ENCODE measurements at regions of chr12 and their contacts with region 1.

Region 1: DNA sequence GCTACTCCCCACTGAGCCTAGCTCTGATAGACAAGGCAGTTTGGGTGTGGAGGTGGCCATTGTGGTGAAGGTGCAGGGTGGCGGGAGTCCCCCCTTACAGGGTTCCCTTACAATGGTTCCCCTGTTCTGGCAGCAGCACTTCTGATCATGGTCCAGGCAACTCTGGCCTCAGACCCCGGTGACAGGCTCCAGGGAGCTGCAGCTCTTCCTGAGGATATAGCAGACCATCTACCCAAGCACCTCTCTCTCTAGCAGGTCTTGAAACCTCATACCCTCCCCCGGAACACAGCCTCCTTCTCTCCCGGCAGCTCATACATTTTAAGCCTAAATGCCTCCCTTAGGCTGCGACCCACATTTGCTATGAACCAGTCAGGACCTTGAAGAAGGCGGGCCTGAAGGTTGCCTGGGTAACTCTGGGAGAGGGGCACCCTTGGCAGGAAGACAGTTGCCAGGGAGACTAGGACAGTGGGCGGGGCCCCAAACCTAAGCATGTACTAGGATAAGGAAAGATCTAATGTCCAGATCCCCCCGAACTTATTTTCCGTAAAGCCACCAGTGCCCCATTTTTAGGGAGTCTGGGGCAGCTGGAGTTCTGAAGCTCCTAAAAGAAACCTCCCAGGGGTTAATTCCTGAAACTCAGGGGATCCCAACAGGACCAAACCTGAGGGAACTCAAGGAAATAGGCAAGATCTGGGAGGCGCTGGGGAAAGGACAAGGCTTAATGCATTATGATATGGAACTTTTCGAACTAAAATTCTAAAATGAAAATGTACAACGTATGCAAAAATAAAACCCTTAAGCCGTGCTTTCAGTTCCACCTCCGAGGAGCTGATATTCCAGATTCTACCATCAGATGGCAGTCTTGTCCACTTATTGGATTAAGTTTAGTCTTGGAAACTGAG is 4.5 kb upstream of the GDF11 start:
- DNase-seq: peak; percentile 57 to 85 (median 58)
- ATAC-seq: peak; percentile 74
- H3K4me3 ChIP-seq: peak overlapping the region; percentile 35
- H3K27ac ChIP-seq: peak overlapping the region; percentile 27
- H3K4me1 ChIP-seq: peaks cover 21 to 24% of the 10 kb centered on the region in 2 experiments
- H3K27me3 ChIP-seq: no peaks in the 10 kb centered on the region
- CTCF ChIP-seq: peak; percentile 66 to 91 (median 85)
- EP300 ChIP-seq: no peak
- POLR2A ChIP-seq: no peak
- RAD21 ChIP-seq: peak; percentile 94

Region 2: DNA sequence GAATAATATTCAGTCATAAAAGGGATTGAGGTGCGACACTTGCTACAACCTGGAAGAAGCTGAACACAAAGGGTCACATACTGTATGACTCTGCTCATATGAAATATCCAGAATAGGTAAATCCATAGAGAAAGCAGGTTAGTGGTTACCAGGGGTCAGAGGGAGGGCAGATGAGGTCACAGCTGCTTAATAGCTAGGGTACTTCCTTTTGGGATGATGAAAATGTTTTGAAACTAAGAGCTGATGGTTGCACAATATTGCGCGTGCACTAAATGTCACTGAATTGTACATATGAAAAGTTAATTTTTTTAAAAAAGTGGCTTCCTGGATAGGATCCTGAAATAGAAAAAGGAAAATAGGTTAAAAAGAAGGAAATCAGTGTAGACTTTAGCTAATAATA is 694.8 kb before region 1 on chr12:
- CTCF ChIA-PET with region 1: no interaction called
- POLR2A ChIA-PET with region 1: no interaction called
- in situ Hi-C with region 1: no loop called
- intact Hi-C with region 1: no loop called
- DNase-seq: no peak
- ATAC-seq: no peak
- H3K4me3 ChIP-seq: no peak overlapping the region
- H3K27ac ChIP-seq: no peak overlapping the region
- H3K4me1 ChIP-seq: no peaks in the 10 kb centered on the region
- H3K27me3 ChIP-seq: peaks cover 6 to 13% of the 10 kb centered on the region in 2 experiments; a peak in 4 of 5 replicates
- CTCF ChIP-seq: no peak
- EP300 ChIP-seq: no peak; the same call in 1 of the 2 replicates
- POLR2A ChIP-seq: no peak
- RAD21 ChIP-seq: no peak

Region 3: DNA sequence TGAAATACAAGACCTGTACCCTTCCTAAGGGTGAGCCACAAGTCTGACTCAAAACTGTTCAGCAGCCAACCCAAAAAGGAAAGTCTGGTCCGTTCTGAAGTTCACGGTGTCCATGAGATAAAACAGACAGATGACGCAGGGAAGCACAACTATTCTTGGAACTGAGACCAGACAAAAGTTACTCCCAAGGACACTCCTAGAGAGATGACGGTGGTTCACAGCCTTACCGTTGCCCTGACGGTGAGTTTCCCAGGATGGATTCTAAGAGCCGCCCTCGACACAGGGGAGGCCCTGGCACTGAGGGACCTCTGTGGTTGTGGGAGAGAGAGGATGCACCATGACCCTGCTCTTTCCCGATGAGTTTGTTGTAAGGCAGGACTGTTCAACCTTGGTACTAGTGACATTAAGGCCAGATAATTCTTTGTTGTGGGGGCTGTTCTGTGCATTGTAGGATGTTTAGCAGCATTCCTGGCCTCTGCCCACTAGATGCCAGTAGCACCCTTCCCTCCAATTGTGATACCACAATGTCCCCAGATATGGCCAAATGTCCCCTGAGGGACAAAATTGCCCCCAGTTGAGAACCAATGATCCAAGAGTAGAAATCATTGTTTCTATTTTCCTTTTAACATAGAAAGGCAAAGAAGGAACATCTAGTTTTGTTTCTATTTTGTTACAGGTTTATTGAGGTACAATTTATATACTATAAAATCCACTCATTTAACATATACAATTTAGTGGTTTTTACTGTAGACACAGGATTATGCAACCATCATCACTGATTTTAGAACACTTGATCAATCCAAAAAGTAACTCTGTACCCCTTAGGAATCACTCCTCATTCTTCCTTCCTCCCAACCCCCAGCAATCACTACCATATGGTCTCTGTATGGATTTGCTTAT is 78.6 kb before region 1 on chr12:
- CTCF ChIA-PET with region 1: interaction called, 3 read pairs
- POLR2A ChIA-PET with region 1: interaction called, 3 read pairs
- in situ Hi-C with region 1: no loop called
- intact Hi-C with region 1: loop called (anchors 1 kb)
- DNase-seq: peak in 2 of 4 experiments; percentile 39 to 67
- ATAC-seq: peak; percentile 51
- H3K4me3 ChIP-seq: no peak overlapping the region
- H3K27ac ChIP-seq: no peak overlapping the region
- H3K4me1 ChIP-seq: peaks cover 0 to 11% of the 10 kb centered on the region in 2 experiments; a peak in 3 of 5 replicates
- H3K27me3 ChIP-seq: peaks cover 2 to 3% of the 10 kb centered on the region in 2 experiments; a peak in 1 of 5 replicates
- CTCF ChIP-seq: peak; percentile 43 to 45 (median 45); a peak in 5 of 6 replicates
- EP300 ChIP-seq: no peak
- POLR2A ChIP-seq: no peak
- RAD21 ChIP-seq: peak; percentile 42 to 61

Region 4: DNA sequence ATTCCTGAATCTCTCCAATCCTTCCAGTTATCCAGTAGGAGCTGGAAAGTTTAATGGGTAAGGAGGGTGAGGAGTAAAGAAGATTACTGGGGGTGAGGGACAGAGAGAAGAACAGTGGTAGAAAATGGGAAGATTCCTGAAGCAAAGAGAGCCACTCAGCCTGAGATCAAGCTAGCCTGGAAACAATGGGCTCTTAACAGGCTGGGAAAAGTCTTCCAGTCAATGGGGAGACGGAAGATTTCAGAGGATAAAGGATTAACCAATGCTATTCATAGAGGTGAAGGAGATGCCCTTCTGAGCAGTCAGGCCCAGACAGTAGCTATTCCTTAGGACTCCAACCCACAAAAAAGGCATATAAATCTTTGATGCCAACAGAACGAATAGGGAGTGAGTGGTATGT is 19.3 kb after region 1 on chr12:
- CTCF ChIA-PET with region 1: no interaction called
- POLR2A ChIA-PET with region 1: interaction called, 44 read pairs
- in situ Hi-C with region 1: no loop called
- intact Hi-C with region 1: no loop called
- DNase-seq: no peak
- ATAC-seq: no peak; the same call in 2 of the 3 replicates
- H3K4me3 ChIP-seq: no peak overlapping the region
- H3K27ac ChIP-seq: no peak overlapping the region
- H3K4me1 ChIP-seq: no peaks in the 10 kb centered on the region; a peak in 1 of 5 replicates
- H3K27me3 ChIP-seq: no peaks in the 10 kb centered on the region
- CTCF ChIP-seq: no peak
- EP300 ChIP-seq: no peak
- POLR2A ChIP-seq: no peak
- RAD21 ChIP-seq: no peak

Region 5: DNA sequence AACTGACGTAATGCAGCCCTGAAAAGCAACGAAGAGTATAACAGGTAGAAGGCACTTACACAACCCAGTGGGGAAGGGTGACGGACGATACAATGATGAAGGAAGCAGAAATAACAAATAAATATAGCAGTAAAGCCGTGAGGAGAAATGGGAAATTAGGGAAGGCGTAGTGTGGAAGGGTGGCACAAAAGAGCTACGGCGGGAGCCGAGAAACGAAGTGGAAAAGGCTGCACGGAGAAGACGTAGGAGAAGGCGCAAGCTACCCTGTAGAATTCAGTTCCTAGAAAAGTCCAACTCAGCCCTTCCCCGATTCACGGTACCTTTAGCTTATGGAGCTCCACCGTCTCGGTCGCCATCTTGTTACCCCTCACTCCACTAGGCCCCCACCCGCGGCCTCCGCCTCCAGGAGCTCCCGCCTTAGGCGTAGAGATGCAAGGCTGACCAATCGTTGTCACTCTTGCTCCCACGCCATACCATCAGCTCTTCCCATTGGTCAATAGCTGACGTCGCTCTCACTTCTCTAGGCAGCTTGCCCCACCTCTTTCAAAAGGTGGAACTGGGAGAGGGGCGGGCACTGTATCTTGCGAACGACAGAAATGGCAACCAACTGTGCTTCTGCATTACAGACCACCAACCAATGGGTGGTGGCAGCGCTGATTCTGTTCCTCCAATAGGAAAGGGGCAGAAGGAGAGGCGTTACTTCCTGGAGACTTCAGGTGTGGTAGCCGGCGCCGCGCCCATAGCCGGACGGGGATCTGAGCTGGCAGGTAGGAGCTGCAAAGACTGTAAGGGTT is 79.2 kb after region 1 on chr12 and contains the starts of genes ORMDL2 and SARNP:
- CTCF ChIA-PET with region 1: interaction called, 3 read pairs
- POLR2A ChIA-PET with region 1: interaction called, 9 read pairs
- in situ Hi-C with region 1: no loop called
- intact Hi-C with region 1: loop called (anchors 2 kb)
- DNase-seq: peak; percentile 98 to 99 (median 98)
- ATAC-seq: peak; percentile 98
- H3K4me3 ChIP-seq: peak within 1 kb of the TSS; percentile 65
- H3K27ac ChIP-seq: peak within 1 kb of the TSS; percentile 93
- H3K4me1 ChIP-seq: peaks cover 3 to 8% of the 10 kb centered on the region in 2 experiments; a peak in 4 of 5 replicates
- H3K27me3 ChIP-seq: no peaks in the 10 kb centered on the region
- CTCF ChIP-seq: no peak
- EP300 ChIP-seq: no peak
- POLR2A ChIP-seq: peak; percentile 92
- RAD21 ChIP-seq: no peak
- polyA plus RNA-seq, gene ORMDL2: 98.0 to 113 TPM
- polyA plus RNA-seq, gene SARNP: 342 to 400 TPM

Region 6: GRCh38 chr12:55940065-55940732 is 201.8 kb after region 1 on chr12:
- CTCF ChIA-PET with region 1: interaction called, 3 read pairs
- POLR2A ChIA-PET with region 1: interaction called, 4 read pairs
- in situ Hi-C with region 1: loop called (anchors 5 kb)
- intact Hi-C with region 1: loop called (anchors 1 kb)
- DNase-seq: peak; percentile 87 to 92 (median 89)
- ATAC-seq: peak; percentile 99
- H3K4me3 ChIP-seq: no peak overlapping the region
- H3K27ac ChIP-seq: no peak overlapping the region
- H3K4me1 ChIP-seq: peaks cover 7 to 13% of the 10 kb centered on the region in 2 experiments; a peak in 4 of 5 replicates
- H3K27me3 ChIP-seq: no peaks in the 10 kb centered on the region; a peak in 1 of 5 replicates
- CTCF ChIP-seq: peak; percentile 89 to 97 (median 94)
- EP300 ChIP-seq: no peak
- POLR2A ChIP-seq: no peak
- RAD21 ChIP-seq: peak; percentile 75 to 88

Region 7: GRCh38 chr12:56041552-56042429 is 303.4 kb after region 1 on chr12 and contains the start of gene RPS26:
- CTCF ChIA-PET with region 1: interaction called, 10 read pairs
- POLR2A ChIA-PET with region 1: interaction called, 9 read pairs
- in situ Hi-C with region 1: no loop called
- intact Hi-C with region 1: loop called (anchors 1 kb)
- DNase-seq: peak; percentile 89 to 100 (median 92)
- ATAC-seq: peak; percentile 90
- H3K4me3 ChIP-seq: peak within 1 kb of the TSS; percentile 83
- H3K27ac ChIP-seq: peak within 1 kb of the TSS; percentile 98
- H3K4me1 ChIP-seq: peaks cover 13 to 25% of the 10 kb centered on the region in 2 experiments; a peak in 3 of 5 replicates
- H3K27me3 ChIP-seq: no peaks in the 10 kb centered on the region
- CTCF ChIP-seq: peak; percentile 42 to 82 (median 73)
- EP300 ChIP-seq: no peak
- POLR2A ChIP-seq: peak; percentile 100
- RAD21 ChIP-seq: peak; percentile 65 to 79
- polyA plus RNA-seq, gene RPS26: 1,319 to 1,589 TPM

Measured in K562 (cell line).